Right cardiac atrium (tissue), 5 donors: ENCODE measurements at regions of chr7 and their contacts with region 1.

Region 1: DNA sequence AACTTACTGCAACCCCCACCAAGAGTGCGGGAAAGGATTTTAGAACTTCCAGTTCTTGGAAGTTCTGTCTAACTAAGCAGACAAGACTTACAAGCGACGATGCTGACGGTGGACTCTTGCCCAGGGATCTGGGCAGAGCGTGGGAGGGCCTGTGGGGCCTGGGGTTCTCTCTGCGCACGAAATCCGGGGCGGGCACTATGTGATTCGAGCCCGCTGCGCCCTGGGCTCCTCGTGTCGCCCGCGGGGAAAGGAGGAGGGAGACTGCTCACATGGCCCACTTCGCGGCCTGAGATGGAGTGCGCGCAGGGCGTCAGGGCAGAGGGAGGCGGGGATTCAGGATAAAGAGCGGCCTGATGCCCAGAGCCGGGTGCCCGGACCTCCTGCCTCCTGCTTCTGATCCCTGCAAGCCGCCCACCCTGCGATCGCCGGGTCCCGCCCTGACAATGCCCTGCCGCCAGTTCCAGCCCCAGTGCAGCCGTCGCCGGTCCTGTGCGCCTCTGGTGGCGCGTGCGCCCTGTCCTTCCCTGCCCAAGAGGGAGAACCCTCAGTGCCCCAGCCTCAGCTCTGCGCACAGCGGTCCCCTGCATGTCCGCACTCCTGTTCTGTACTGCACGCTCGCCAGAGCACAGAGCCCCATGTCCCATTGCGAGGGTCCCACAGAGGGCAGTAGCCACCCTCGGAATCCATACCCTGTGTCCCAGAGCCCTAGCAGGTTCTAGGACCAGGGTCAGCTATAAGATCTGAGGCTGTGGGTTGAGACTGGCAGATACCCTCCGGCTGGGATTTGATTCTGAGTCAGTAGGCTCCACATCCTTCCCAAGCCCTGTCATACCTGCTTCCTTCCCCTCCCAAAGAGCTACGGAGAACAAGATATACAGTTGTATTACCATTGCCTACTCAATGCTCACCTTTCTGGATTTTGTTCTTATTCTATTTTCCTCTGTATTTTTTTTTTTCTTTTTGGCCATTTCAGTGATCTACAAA is 99.4 kb upstream of the TMEM106B start:
- DNase-seq: peak in 2 of 3 donors; percentile 50 to 51
- ATAC-seq: peak; percentile 16 to 48
- H3K4me3 ChIP-seq: peak overlapping the region; percentile 37
- H3K27ac ChIP-seq: no peak overlapping the region
- H3K4me1 ChIP-seq: no peaks in the 10 kb centered on the region
- H3K27me3 ChIP-seq: no peaks in the 10 kb centered on the region

Region 2: GRCh38 chr7:12158334-12159060 is 46.8 kb after region 1 on chr7:
- intact Hi-C with region 1: no loop called
- DNase-seq: no peak
- ATAC-seq: no peak
- H3K4me3 ChIP-seq: no peak overlapping the region
- H3K27ac ChIP-seq: no peak overlapping the region
- H3K4me1 ChIP-seq: no peaks in the 10 kb centered on the region
- H3K27me3 ChIP-seq: no peaks in the 10 kb centered on the region

Region 3: GRCh38 chr7:12174931-12175330 is 63.2 kb after region 1 on chr7:
- intact Hi-C with region 1: loop called in 1 of 4 experiments (anchors 10 kb)
- DNase-seq: no peak
- ATAC-seq: no peak
- H3K4me3 ChIP-seq: no peak overlapping the region
- H3K27ac ChIP-seq: no peak overlapping the region
- H3K4me1 ChIP-seq: no peaks in the 10 kb centered on the region
- H3K27me3 ChIP-seq: no peaks in the 10 kb centered on the region

Region 4: DNA sequence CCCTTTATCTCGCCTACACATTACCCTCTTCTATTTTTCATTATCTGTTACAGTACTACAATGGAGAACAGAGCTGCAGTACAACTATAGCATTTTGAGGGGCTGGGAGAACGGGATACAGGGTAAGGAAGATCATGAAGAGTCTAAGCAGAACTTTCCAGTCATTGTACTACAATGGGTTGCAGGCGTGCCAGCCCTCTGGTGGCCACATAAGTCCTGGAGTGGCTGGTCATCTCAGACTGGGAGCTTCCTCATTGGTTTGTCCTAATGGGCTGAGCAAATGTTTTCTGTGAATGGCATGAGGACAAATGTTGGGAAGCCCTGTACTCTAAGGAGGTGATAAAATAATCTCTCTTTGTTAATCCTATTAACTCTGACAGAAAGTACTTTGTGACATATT is 132.4 kb after region 1 on chr7:
- intact Hi-C with region 1: no loop called
- DNase-seq: peak in 2 of 3 donors; percentile 28 to 52
- ATAC-seq: peak in 1 of 2 donors; percentile 44
- H3K4me3 ChIP-seq: no peak overlapping the region
- H3K27ac ChIP-seq: no peak overlapping the region
- H3K4me1 ChIP-seq: no peaks in the 10 kb centered on the region
- H3K27me3 ChIP-seq: no peaks in the 10 kb centered on the region